Activated naive CD8-positive, alpha-beta T cell treated with anti-CD3 and anti-CD28 coated beads, Interleukin-2, amount 10 ng/mL, durations not matched to agents 7 days and 5 days (primary cell): ENCODE measurements at regions of chr19 and their contacts with region 1.

Region 1: GRCh38 chr19:1074544-1075283 is 7.7 kb downstream of the ARHGAP45 start:
- DNase-seq: peak; percentile 91
- ATAC-seq: peak; percentile 32
- H3K4me3 Mint-ChIP-seq: peak overlapping the region; percentile 72
- H3K27ac Mint-ChIP-seq: peak overlapping the region; percentile 87
- H3K4me1 Mint-ChIP-seq: peaks cover 39% of the 10 kb centered on the region
- H3K27me3 Mint-ChIP-seq: no peaks in the 10 kb centered on the region

Region 2: GRCh38 chr19:1020868-1021425 is 53.8 kb before region 1 on chr19 and contains the start of gene TMEM259:
- POLR2A ChIA-PET with region 1: interaction called, 130 read pairs
- DNase-seq: peak; percentile 97
- ATAC-seq: peak; percentile 86
- H3K4me3 Mint-ChIP-seq: peak within 1 kb of the TSS; percentile 90
- H3K27ac Mint-ChIP-seq: peak within 1 kb of the TSS; percentile 99
- H3K4me1 Mint-ChIP-seq: peaks cover 20% of the 10 kb centered on the region
- H3K27me3 Mint-ChIP-seq: no peaks in the 10 kb centered on the region
- total RNA-seq, gene TMEM259: 231 to 235 TPM

Region 3: GRCh38 chr19:1026189-1027019 is 48.3 kb before region 1 on chr19 and contains the start of gene CNN2:
- POLR2A ChIA-PET with region 1: interaction called, 130 read pairs
- DNase-seq: peak; percentile 84
- ATAC-seq: peak; percentile 59
- H3K4me3 Mint-ChIP-seq: peak within 1 kb of the TSS; percentile 96
- H3K27ac Mint-ChIP-seq: peak within 1 kb of the TSS; percentile 92
- H3K4me1 Mint-ChIP-seq: peaks cover 18% of the 10 kb centered on the region
- H3K27me3 Mint-ChIP-seq: no peaks in the 10 kb centered on the region
- total RNA-seq, gene CNN2: 340 to 353 TPM

Region 4: DNA sequence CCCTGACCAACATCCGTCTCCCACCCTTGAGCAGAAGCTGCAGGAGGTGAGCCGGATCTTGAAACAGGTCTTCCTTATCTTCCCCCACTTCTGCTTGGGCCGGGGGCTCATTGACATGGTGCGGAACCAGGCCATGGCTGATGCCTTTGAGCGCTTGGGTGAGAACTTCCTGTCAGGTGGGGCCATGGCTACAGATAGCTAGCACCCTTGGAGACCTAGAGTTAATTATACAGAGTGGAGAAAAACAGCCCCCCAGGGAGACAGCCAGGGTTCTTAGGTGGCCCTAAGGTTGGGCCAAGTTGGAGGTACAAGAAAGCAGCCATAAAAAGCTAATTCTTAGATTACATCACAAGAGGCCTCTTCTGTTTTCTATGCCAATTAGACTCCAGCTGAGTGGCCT is 16.6 kb before region 1 on chr19:
- POLR2A ChIA-PET with region 1: no interaction called
- DNase-seq: no peak
- ATAC-seq: no peak
- H3K4me3 Mint-ChIP-seq: no peak overlapping the region
- H3K27ac Mint-ChIP-seq: no peak overlapping the region
- H3K4me1 Mint-ChIP-seq: no peaks in the 10 kb centered on the region
- H3K27me3 Mint-ChIP-seq: no peaks in the 10 kb centered on the region

Region 5: DNA sequence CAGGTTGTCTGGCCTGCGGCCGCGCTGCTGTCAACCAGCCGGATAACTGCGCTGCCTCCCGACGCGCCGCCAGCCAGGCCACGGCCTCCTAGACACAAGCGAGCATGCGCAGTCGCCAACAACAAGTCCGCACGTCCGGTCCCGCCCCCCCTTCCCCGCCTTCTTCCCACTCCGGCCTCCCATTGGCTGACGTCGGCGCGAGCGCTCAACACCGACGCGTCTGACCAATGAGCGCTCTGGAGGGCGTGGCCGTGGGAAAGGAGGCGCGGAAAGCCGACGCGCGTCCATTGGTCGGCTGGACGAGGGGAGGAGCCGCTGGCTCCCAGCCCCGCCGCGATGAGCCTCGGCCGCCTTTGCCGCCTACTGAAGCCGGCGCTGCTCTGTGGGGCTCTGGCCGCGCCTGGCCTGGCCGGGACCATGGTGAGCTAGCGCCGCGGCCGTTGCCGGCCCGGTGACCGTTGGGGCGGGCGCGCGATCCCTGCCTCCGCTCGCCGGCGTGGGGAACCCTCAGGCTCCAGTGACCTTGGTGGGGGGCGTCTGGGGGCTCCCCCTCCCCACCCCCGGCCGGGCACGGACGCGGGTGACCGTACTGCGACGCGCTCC is 29.1 kb after region 1 on chr19 and contains the start of gene GPX4:
- POLR2A ChIA-PET with region 1: interaction called, 13 read pairs
- DNase-seq: peak; percentile 96
- ATAC-seq: peak; percentile 86
- H3K4me3 Mint-ChIP-seq: peak within 1 kb of the TSS; percentile 79
- H3K27ac Mint-ChIP-seq: peak within 1 kb of the TSS; percentile 80
- H3K4me1 Mint-ChIP-seq: peaks cover 27% of the 10 kb centered on the region
- H3K27me3 Mint-ChIP-seq: no peaks in the 10 kb centered on the region
- total RNA-seq, gene GPX4: 194 to 206 TPM